K562 (cell line): ENCODE measurements at regions of chr1 and their contacts with region 1.

Region 1: DNA sequence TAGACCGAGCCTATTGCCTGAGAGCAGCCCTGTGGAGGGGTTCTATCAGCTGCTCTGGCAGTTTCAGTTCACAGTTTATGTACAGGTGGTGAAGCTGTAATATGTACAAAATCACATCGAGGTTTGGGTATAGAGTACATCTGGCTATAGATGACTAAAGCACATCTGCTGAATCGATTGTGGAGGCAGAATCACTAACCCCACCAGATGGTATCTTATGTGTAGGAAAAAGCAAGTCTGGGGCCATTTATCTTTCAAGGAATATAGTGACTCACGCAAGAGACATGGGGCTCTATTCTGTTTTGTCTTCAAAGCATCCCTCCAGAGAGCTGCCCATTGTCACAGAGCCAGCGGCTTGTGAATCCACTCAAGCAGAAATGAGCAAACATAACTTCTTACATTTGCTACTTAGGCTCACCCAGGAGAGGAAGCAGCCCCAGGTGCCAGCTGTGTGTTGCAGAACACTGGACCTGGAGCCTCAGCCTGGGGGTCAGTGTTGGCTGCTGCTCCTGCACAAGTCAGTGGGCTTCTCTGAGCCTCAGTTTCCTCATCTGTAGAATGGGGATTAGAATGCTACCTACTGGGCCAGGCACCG is 21.3 kb downstream of the MIIP start:
- DNase-seq: peak in 3 of 4 experiments; percentile 37 to 73 (median 59)
- ATAC-seq: peak; percentile 16; the same call in 2 of the 3 replicates
- H3K4me3 ChIP-seq: no peak overlapping the region
- H3K27ac ChIP-seq: no peak overlapping the region
- H3K4me1 ChIP-seq: peaks cover 47 to 48% of the 10 kb centered on the region in 2 experiments
- H3K27me3 ChIP-seq: no peaks in the 10 kb centered on the region
- CTCF ChIP-seq: no peak
- EP300 ChIP-seq: no peak; the same call in 1 of the 2 replicates
- POLR2A ChIP-seq: no peak
- RAD21 ChIP-seq: 0 out of 4 replicates have a peak, but pooled peaks of 1 of the 2 experiments have one; percentile 19

Region 2: DNA sequence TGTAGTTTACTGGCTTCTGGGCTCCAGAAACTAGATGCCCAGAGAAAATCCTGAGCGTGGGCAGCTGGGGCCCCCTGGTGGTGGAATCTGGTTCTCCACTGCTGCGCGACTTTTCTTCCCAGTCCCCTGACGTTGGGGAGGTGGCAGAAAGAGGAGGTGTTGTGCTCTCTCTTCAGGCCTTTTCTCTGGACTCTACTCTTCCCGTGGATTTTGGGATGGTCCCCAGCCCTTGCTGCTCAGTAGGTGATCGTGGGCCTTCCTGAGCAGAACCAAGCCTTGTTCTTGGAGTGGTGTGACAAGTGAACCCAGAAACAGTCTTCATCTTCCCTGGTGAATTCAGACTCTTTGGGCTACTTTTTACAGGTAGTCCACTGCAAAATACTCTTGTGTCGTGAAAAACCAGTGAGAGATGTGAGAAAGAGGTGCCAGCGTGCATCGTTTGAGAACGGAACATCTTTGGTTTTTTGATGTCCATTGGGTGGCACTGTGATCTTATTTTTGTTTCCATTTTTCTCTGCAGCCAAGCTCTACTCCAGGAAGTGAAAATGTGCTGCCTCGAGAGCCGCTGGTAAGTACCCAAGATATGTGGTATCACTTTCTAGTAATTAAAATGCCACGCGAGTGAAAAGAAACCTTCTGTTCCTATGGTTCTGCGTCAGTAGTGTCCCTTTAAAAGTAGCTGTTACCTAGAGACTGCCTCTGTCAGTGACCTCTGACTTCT is 1545.6 kb before region 1 on chr1:
- CTCF ChIA-PET with region 1: no interaction called
- POLR2A ChIA-PET with region 1: no interaction called
- in situ Hi-C with region 1: no loop called
- intact Hi-C with region 1: no loop called
- DNase-seq: peak; percentile 83 to 87 (median 84)
- ATAC-seq: peak; percentile 96
- H3K4me3 ChIP-seq: no peak overlapping the region
- H3K27ac ChIP-seq: no peak overlapping the region; the same call in 2 of the 3 replicates
- H3K4me1 ChIP-seq: peaks cover 0 to 3% of the 10 kb centered on the region in 2 experiments; a peak in 2 of 5 replicates
- H3K27me3 ChIP-seq: no peaks in the 10 kb centered on the region
- CTCF ChIP-seq: peak; percentile 94 to 97 (median 95)
- EP300 ChIP-seq: no peak
- POLR2A ChIP-seq: no peak
- RAD21 ChIP-seq: peak; percentile 85 to 93

Region 3: DNA sequence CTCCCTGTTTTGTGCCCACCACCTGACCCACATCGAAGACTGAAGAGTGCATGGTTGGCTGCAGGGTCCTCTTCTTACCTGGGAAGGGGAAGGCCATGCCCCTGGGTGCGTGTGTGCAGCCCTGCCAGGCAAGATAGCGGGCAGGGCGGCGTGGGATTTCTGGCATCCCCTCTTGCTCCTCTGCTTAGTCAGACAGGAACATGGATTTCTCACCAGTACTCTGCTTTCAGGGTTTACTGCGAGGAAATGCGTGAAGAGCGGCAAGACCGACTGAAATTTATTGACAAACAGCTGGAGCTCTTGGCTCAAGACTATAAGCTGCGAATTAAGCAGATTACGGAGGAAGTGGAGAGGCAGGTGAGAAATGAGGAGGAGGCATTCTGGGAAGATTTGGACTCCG is 36.8 kb before region 1 on chr1:
- CTCF ChIA-PET with region 1: no interaction called
- POLR2A ChIA-PET with region 1: no interaction called
- in situ Hi-C with region 1: no loop called
- intact Hi-C with region 1: no loop called
- DNase-seq: no peak
- ATAC-seq: no peak
- H3K4me3 ChIP-seq: no peak overlapping the region
- H3K27ac ChIP-seq: no peak overlapping the region
- H3K4me1 ChIP-seq: peaks cover 23 to 34% of the 10 kb centered on the region in 2 experiments; a peak in 4 of 5 replicates
- H3K27me3 ChIP-seq: no peaks in the 10 kb centered on the region
- CTCF ChIP-seq: no peak
- EP300 ChIP-seq: no peak
- POLR2A ChIP-seq: no peak; the same call in 1 of the 2 replicates
- RAD21 ChIP-seq: no peak

Region 4: DNA sequence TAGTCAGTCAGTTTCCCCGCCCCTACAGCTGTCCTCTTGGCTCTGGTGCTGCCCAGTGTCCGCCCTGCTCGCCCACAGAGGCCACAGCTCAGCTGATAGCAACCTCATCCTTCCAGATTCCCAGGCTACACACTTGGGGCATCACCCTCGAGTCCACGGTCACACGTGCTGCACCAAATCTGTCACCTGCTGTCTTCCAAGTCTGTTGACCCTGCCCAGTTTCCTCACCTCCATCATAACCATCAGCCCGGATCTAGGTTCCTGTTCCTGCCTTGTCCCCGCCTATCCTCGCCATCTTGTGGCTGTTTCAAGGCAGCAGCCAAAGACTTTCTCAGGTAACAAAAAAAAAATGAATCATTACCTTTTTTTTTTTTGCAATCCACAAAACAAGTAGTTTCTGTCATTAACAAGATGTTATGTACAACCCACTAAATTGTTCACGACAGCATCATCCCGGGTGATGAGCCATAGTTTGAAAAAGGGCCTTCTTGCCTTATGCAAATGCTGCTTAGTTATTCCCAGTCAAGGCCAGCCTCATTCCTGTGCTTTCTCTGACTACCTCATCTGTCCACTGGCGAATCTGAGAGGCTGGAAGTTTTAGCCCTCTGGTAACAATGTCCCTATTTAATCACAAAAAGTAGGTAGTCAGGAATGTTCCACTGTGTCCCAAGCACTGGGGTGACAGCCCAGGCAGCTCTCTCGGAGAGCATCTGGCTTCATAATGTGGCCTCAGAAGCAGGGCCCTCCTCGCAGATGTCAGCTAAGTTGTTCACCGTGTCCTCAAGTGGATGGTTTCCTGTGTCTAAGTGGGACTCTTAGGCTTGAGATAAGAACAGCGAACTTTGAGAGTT is 26.2 kb before region 1 on chr1:
- CTCF ChIA-PET with region 1: no interaction called
- POLR2A ChIA-PET with region 1: interaction called, 28 read pairs
- in situ Hi-C with region 1: no loop called
- intact Hi-C with region 1: no loop called
- DNase-seq: peak; percentile 61 to 72 (median 64)
- ATAC-seq: peak; percentile 45
- H3K4me3 ChIP-seq: no peak overlapping the region
- H3K27ac ChIP-seq: peak overlapping the region; percentile 75
- H3K4me1 ChIP-seq: peaks cover 37 to 45% of the 10 kb centered on the region in 2 experiments
- H3K27me3 ChIP-seq: no peaks in the 10 kb centered on the region
- CTCF ChIP-seq: peak; percentile 36 to 56 (median 54); a peak in 5 of 6 replicates
- EP300 ChIP-seq: no peak
- POLR2A ChIP-seq: peak; percentile 60; the same call in 1 of the 2 replicates
- RAD21 ChIP-seq: 0 out of 4 replicates have a peak, but pooled peaks of 1 of the 2 experiments have one; percentile 3

Region 5: DNA sequence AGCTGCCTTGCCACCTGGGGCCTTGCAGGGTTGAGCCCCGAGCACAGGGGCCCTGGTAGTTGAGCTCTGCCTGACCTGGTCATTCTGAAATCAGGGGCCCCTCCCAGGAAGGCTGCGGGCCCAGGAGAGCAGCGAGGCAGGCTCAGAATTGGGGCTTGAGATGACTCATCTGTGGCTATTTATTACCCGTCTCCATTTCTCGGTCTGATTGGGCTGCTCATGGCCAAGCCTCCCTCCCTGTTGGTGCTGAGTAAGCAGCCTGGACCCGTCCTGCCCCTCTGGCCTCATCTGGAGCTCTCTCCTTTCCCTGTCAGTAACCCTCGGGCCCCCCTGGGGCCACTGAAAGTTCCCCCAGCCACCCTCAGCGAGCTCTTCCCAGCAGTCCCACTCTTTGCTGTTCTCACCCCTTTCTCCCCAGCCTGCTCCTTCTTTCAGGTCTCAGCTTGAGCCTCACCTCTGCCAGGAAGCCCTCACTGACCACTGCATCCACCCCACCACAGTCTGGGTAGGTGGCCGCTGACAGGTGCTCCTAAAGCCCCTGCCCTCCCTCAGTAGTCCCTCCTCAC is 11.5 kb after region 1 on chr1:
- CTCF ChIA-PET with region 1: no interaction called
- POLR2A ChIA-PET with region 1: interaction called, 48 read pairs
- in situ Hi-C with region 1: no loop called
- intact Hi-C with region 1: no loop called
- DNase-seq: peak; percentile 80 to 94 (median 86)
- ATAC-seq: peak; percentile 96
- H3K4me3 ChIP-seq: no peak overlapping the region
- H3K27ac ChIP-seq: peak overlapping the region; percentile 54
- H3K4me1 ChIP-seq: peaks cover 20 to 44% of the 10 kb centered on the region in 2 experiments; a peak in 4 of 5 replicates
- H3K27me3 ChIP-seq: no peaks in the 10 kb centered on the region
- CTCF ChIP-seq: no peak
- EP300 ChIP-seq: peak; percentile 41
- POLR2A ChIP-seq: no peak
- RAD21 ChIP-seq: no peak

Region 6: GRCh38 chr1:12078938-12079861 is 38.6 kb after region 1 on chr1:
- CTCF ChIA-PET with region 1: no interaction called
- POLR2A ChIA-PET with region 1: interaction called, 5 read pairs
- in situ Hi-C with region 1: no loop called
- intact Hi-C with region 1: loop called (anchors 5 kb)
- DNase-seq: peak; percentile 74 to 83 (median 78)
- ATAC-seq: peak; percentile 68
- H3K4me3 ChIP-seq: no peak overlapping the region
- H3K27ac ChIP-seq: peak overlapping the region; percentile 49; the same call in 1 of the 3 replicates
- H3K4me1 ChIP-seq: peaks cover 46 to 50% of the 10 kb centered on the region in 2 experiments
- H3K27me3 ChIP-seq: no peaks in the 10 kb centered on the region
- CTCF ChIP-seq: peak; percentile 85 to 91 (median 86)
- EP300 ChIP-seq: no peak
- POLR2A ChIP-seq: no peak
- RAD21 ChIP-seq: peak; percentile 59 to 87